ENCODE measurements at regions of chr2 and their contacts with region 1.

Region 1: GRCh38 chr2:199459286-199460016 is 1.7 kb upstream of the SATB2 start:
- DNase-seq: peak; percentile 77
- H3K4me3 Mint-ChIP-seq: peak overlapping the region; percentile 80
- H3K27ac Mint-ChIP-seq: peak overlapping the region; percentile 28
- H3K4me1 Mint-ChIP-seq: peaks cover 30% of the 10 kb centered on the region
- H3K27me3 Mint-ChIP-seq: peaks cover 59% of the 10 kb centered on the region

Region 2: DNA sequence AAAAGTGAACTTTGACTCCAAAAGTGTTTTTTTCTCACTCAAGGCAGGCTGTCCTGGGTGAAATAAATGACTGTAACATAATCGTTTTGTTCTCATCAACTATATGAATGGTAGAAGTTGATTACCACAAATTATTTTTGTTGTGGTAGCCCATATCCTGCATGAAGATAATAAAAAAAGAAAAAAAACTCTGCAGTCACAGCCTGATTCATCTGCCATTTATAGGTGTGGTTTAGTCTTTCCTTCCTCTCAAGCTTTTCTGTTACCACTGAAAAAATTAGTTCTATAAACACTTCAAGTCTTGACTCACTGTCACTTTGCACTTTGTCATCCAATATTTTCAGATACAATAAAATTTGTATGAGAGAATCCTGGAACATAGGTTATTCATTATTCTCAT is 1133.0 kb before region 1 on chr2:
- CTCF ChIA-PET with region 1: no interaction called
- POLR2A ChIA-PET with region 1: no interaction called
- intact Hi-C with region 1: loop called (anchors 5 kb)
- DNase-seq: no peak
- H3K4me3 Mint-ChIP-seq: no peak overlapping the region
- H3K27ac Mint-ChIP-seq: no peak overlapping the region
- H3K4me1 Mint-ChIP-seq: peaks cover 21% of the 10 kb centered on the region
- H3K27me3 Mint-ChIP-seq: peaks cover 18% of the 10 kb centered on the region

Region 3: GRCh38 chr2:198374375-198375082 is 1084.9 kb before region 1 on chr2:
- CTCF ChIA-PET with region 1: interaction called, 4 read pairs
- POLR2A ChIA-PET with region 1: no interaction called
- intact Hi-C with region 1: loop called (anchors 5 kb)
- DNase-seq: peak; percentile 35
- H3K4me3 Mint-ChIP-seq: no peak overlapping the region
- H3K27ac Mint-ChIP-seq: no peak overlapping the region
- H3K4me1 Mint-ChIP-seq: peaks cover 9% of the 10 kb centered on the region
- H3K27me3 Mint-ChIP-seq: peaks cover 32% of the 10 kb centered on the region

Region 4: GRCh38 chr2:199471443-199472057 is 12.1 kb after region 1 on chr2:
- CTCF ChIA-PET with region 1: interaction called, 6 read pairs
- POLR2A ChIA-PET with region 1: no interaction called
- intact Hi-C with region 1: loop called (anchors 1 kb)
- DNase-seq: peak; percentile 57
- H3K4me3 Mint-ChIP-seq: no peak overlapping the region
- H3K27ac Mint-ChIP-seq: no peak overlapping the region
- H3K4me1 Mint-ChIP-seq: peaks cover 10% of the 10 kb centered on the region
- H3K27me3 Mint-ChIP-seq: peaks cover 76% of the 10 kb centered on the region

Region 5: GRCh38 chr2:199911052-199911876 is 451.8 kb after region 1 on chr2 and contains the start of gene C2orf69:
- CTCF ChIA-PET with region 1: no interaction called
- POLR2A ChIA-PET with region 1: no interaction called
- intact Hi-C with region 1: no loop called
- DNase-seq: peak; percentile 97
- H3K4me3 Mint-ChIP-seq: peak within 1 kb of the TSS; percentile 88
- H3K27ac Mint-ChIP-seq: peak within 1 kb of the TSS; percentile 77
- H3K4me1 Mint-ChIP-seq: peaks cover 30% of the 10 kb centered on the region
- H3K27me3 Mint-ChIP-seq: no peaks in the 10 kb centered on the region
- total RNA-seq, gene C2orf69: 17.9 to 18.9 TPM

Measured in activated CD4-positive, alpha-beta memory T cell treated with anti-CD3 and anti-CD28 coated beads for 36 hours (primary cell).